Activated B cell treated with CpG ODN at 0.5 μM for 24 hours (primary cell): ENCODE measurements at regions of chr16 and their contacts with region 1.

Region 1: DNA sequence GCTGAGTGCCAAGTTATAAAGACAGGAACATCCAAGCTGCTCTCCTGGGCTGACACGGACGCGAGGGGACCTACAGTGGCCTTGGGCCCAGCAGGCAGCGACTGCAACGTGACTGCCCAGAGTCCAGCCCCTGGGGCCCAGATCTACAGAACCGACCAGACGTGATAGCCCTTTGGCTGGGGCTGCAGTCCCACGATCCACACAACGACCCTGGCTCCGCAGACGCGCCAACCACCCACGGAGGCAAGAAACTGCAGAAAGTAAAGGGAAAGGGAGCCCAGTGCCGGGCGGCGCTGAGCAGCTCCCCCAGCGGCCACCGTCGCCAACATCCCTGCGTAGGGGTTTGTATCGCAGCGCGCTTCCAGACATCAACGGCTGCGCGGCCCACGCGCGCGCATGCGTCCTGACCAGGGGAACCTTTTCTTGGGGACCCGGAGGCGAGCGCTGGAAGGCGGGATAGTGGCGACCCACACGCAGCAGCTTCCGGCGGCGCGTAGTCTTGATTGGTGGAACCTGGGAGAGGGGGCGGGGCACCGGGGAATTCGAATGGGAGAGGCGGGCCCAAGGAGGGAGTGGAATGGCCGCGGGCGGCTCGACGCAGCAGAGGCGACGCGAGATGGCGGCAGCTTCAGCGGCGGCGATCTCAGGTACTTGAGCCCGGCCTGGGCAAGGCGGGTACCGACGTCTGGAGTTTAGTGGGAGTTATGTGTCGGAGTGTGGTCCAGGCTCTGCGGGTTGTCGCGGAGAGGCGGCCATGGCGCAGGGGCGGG is at the start of gene KIF22:
- DNase-seq: peak; percentile 99
- ATAC-seq: peak; percentile 97
- H3K4me3 Mint-ChIP-seq: peak within 1 kb of the TSS; percentile 98
- H3K27ac Mint-ChIP-seq: peak within 1 kb of the TSS; percentile 93
- H3K4me1 Mint-ChIP-seq: peaks cover 34% of the 10 kb centered on the region
- H3K27me3 Mint-ChIP-seq: no peaks in the 10 kb centered on the region
- CTCF ChIP-seq: no peak
- total RNA-seq, gene KIF22: 33.1 and 40.1 TPM in 2 replicates

Region 2: GRCh38 chr16:29729116-29729521 is 61.2 kb before region 1 on chr16:
- CTCF ChIA-PET with region 1: interaction called, 5 read pairs
- POLR2A ChIA-PET with region 1: interaction called, 8 read pairs
- intact Hi-C with region 1: loop called (anchors 5 kb)
- DNase-seq: no peak
- ATAC-seq: no peak
- H3K4me3 Mint-ChIP-seq: no peak overlapping the region
- H3K27ac Mint-ChIP-seq: no peak overlapping the region
- H3K4me1 Mint-ChIP-seq: peaks cover 27% of the 10 kb centered on the region
- H3K27me3 Mint-ChIP-seq: no peaks in the 10 kb centered on the region
- CTCF ChIP-seq: no peak

Region 3: DNA sequence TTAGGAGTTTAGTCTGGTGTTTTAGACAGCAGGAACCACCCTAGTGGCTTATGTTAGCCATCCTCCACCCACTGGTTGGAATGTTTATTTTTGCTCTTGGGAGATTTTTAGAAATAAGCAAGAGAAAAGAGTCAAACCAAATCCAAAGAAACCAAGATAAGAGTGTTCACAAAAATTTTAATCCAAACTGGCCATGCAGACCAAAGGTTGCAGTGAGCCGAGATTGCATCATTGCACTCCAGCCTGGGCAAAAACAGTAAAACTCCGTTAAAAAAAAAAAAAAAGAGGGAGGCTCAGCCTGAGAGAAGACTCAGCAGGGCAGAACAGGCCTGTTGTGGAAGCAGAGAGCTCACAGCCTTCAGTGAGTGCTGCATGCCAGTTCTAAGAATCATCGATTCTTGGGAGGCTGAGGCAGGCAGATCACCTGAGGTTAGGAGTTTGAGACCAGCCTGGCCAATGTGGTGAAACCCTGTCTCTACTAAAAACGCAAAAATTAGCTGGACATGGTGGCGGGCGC is 32.4 kb before region 1 on chr16:
- CTCF ChIA-PET with region 1: interaction called, 6 read pairs
- POLR2A ChIA-PET with region 1: interaction called, 10 read pairs
- intact Hi-C with region 1: no loop called
- DNase-seq: no peak
- ATAC-seq: no peak
- H3K4me3 Mint-ChIP-seq: no peak overlapping the region
- H3K27ac Mint-ChIP-seq: no peak overlapping the region
- H3K4me1 Mint-ChIP-seq: peaks cover 27% of the 10 kb centered on the region
- H3K27me3 Mint-ChIP-seq: no peaks in the 10 kb centered on the region
- CTCF ChIP-seq: no peak

Region 4: GRCh38 chr16:29848420-29849297 is 58.3 kb after region 1 on chr16:
- CTCF ChIA-PET with region 1: interaction called, 4 read pairs
- POLR2A ChIA-PET with region 1: interaction called, 6 read pairs
- intact Hi-C with region 1: loop called (anchors 1 kb)
- DNase-seq: peak; percentile 60
- ATAC-seq: peak; percentile 82
- H3K4me3 Mint-ChIP-seq: no peak overlapping the region
- H3K27ac Mint-ChIP-seq: no peak overlapping the region
- H3K4me1 Mint-ChIP-seq: no peaks in the 10 kb centered on the region
- H3K27me3 Mint-ChIP-seq: no peaks in the 10 kb centered on the region
- CTCF ChIP-seq: peak; percentile 52